GM13976 (cell line): ENCODE measurements at regions of chr17 and their contacts with region 1.

Region 1: GRCh38 chr17:33401249-33401648 is 108.2 kb upstream of the ASIC2 start:
- DNase-seq: no peak
- CTCF ChIP-seq: no peak

Region 2: DNA sequence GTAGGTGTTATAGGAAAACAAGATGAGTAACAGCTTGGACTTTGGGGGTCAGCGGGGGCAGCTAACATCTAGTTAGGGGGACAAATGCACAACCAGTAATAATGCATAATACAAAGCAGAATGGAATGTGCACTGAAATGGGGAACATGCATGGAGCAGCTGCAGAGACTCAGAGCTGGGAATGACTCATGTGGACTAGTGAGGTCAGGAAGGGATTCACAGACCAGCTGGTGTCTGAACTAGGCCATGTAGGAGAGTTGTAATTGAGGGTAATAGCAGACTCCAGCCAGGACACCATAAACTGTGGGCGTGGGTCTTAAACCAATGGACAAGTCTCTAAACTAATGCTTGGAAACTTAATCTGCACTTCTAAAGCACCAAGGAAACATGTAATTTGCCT is 68.7 kb after region 1 on chr17:
- in situ Hi-C with region 1: loop called (anchors 10 kb)
- DNase-seq: no peak
- CTCF ChIP-seq: no peak

Region 3: DNA sequence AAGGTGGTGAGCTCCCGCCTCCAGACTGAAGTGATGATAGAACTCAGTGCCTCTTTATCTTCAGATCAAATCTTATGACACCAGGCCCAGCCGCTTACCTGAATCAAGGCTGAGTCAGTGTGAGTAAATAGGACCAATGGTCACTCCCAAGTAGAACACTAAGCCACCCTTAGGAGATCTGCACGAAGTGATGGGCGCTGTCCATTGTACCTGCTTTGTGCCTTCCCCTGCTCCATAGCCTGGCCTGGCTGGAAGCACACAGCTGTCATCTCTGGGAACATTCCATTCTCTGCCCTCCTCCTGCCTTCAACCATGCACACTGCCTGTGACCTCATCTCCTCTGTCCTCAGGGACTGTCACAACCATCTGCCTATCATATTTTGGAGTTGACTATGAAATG is 171.3 kb after region 1 on chr17:
- in situ Hi-C with region 1: no loop called
- DNase-seq: no peak
- CTCF ChIP-seq: no peak